ENCODE measurements at regions of chr7 and their contacts with region 1.

Region 1: GRCh38 chr7:23261843-23262452 is 15.4 kb downstream of the GPNMB start:
- DNase-seq: peak; percentile 61 to 62
- H3K4me3 ChIP-seq: no peak overlapping the region
- H3K27ac ChIP-seq: no peak overlapping the region
- H3K4me1 ChIP-seq: no peaks in the 10 kb centered on the region
- H3K27me3 ChIP-seq: no peaks in the 10 kb centered on the region
- CTCF ChIP-seq: peak; percentile 99

Region 2: DNA sequence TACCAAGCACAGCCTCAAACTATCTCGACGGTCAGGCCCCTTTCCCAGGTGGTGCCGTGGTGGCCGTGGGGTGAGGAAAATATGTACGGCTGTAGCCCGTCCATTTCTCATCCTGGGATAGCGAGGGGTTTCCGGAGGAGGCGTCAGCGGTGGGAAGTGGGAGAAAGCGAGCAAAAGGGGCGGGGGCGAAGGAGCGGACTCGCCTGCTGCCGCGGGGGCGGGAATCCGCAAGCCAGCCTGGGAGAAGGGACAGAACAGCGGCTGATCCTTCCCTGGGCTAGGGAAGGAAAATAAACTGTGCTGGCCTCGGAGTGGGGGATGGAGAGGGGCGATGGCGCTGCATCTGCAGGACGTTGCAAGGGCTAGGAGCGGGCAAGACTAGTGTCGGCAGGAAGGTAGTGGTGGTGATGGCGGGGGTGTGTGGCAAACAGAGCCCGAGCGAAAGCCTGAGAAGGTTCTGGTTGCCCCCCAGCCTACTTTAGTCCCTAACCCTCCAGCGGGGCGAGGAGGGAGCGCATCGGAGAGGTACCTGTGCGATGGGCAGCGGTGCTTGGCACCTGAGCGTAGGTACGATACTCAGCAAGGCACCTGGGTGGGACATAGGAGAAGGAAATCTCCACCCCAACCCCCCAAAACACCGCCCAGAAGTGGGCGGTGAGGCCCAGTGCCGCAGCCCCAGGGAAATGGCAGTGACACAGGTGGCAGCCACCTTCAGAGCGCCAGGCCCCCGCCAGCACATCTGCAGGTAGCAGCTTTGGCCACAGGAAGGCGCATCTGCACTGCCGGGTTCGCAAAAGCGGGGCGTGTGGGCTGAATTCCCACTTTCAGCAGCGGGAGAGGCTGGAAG is 712.1 kb before region 1 on chr7:
- CTCF ChIA-PET with region 1: no interaction called
- POLR2A ChIA-PET with region 1: no interaction called
- intact Hi-C with region 1: loop called (anchors 2 kb)
- DNase-seq: peak in 1 of 2 experiments; percentile 79
- H3K4me3 ChIP-seq: no peak overlapping the region
- H3K27ac ChIP-seq: no peak overlapping the region
- H3K4me1 ChIP-seq: no peaks in the 10 kb centered on the region
- H3K27me3 ChIP-seq: no peaks in the 10 kb centered on the region
- CTCF ChIP-seq: peak; percentile 65

Measured in PC-9 (cell line).